Mammary epithelial cell (primary cell): ENCODE measurements at regions of chr3 and their contacts with region 1.

Region 1: DNA sequence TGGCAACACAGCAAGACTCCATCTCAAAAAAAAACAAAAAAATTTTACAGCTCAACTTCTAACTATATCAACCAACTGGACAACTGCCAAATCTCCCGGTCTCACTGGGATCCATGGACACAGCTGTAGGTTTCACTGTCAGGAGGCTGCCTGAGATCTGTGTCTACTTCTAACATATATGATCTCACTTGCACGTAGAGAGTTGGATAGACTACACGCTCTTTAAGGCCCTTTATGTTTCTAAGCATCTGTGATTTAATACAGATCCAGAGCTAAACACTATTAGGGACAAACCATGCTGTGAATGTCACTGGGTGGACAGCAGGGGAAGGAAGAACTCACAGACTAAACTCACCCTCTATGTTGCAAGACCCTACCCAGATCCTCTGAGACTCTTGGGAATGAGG is 13.0 kb upstream of the APOD start:
- DNase-seq: no peak
- H3K4me3 ChIP-seq: no peak overlapping the region
- H3K27ac ChIP-seq: no peak overlapping the region
- H3K4me1 ChIP-seq: no peaks in the 10 kb centered on the region
- H3K27me3 ChIP-seq: no peaks in the 10 kb centered on the region
- CTCF ChIP-seq: no peak

Region 2: DNA sequence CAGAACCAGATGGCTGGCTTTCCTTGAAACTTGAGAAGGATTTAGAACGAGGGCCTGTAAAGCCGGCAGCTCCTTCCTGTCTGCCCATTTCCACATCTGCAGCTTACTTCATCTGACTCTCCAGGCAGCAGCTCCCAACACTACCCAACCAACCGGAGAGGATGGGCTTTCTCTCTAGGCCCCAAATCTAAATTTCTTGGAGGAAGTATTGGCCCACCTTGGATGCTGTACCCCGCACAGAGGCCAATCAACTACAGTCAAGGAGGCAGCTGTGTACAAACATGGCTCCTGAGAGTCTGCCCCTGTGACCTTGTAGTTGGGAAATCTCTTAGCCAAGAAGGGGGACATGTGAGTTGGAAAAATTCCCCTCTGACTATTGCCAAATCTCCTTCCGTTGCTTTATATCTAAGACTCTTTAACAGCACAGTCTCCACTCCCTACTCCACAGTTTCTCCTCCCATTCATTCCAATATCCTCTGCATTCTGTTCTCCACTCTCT is 146.0 kb before region 1 on chr3:
- CTCF ChIA-PET with region 1: no interaction called
- dilution Hi-C with region 1: loop called (anchors 5 kb)
- in situ Hi-C with region 1: no loop called
- intact Hi-C with region 1: no loop called
- DNase-seq: no peak
- H3K4me3 ChIP-seq: no peak overlapping the region
- H3K27ac ChIP-seq: no peak overlapping the region
- H3K4me1 ChIP-seq: no peaks in the 10 kb centered on the region
- H3K27me3 ChIP-seq: no peaks in the 10 kb centered on the region
- CTCF ChIP-seq: no peak

Region 3: DNA sequence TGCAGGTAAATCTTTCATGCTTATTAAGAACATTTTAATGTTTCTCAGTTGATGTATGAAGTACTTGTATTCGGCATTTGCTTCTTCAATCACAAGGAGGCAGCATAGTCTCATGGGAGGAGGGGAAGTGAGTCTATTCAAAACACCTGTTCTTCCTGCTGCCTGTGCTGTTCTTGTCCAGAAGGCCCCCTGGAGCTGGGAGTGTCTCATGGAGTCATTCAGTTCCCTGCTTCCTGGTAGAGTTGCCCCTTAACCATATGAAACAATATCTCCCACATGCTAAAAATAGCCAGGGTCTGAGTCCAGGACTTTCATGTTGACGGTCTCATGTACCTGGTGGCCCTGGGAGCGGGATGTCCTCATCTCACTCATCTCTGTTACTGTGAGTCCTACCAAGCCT is 38.2 kb before region 1 on chr3:
- CTCF ChIA-PET with region 1: no interaction called
- dilution Hi-C with region 1: no loop called
- in situ Hi-C with region 1: no loop called
- intact Hi-C with region 1: loop called (anchors 5 kb)
- DNase-seq: peak; percentile 38
- H3K4me3 ChIP-seq: no peak overlapping the region
- H3K27ac ChIP-seq: no peak overlapping the region
- H3K4me1 ChIP-seq: peaks cover 6% of the 10 kb centered on the region
- H3K27me3 ChIP-seq: no peaks in the 10 kb centered on the region
- CTCF ChIP-seq: peak; percentile 38 to 66

Region 4: DNA sequence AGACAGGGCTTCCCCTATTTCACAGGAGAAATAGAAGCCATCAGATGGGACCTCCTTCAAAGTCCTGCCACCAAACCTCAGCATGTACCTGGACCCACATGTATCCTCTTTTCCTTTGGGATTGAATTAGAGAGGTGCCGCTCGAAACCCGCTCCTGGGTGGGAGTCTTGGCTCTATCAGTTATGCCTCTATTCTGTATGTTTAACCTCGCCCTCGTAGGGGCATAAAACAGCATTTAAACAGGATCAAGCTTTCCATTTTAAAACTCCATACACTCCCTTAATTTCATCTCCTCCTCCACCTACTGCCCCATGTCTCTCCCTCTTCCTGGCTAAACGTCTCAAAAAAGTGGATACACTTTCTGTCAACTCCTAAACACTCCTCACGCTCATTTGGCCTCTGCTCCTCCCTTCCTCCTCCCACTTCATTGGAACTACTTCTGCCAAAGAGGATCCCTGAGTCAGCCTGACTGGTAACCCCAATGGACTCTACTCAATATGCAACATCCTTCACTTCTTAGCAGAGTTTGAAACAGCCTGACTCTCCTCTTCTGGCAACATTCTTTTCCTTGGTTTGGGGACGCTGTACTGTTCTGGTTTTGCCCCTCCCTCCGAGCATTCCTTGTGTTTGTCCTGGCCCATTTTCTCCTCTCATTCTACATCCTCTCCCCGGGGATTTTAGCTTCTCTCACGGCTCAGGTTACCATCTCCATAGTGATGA is 101.0 kb after region 1 on chr3:
- CTCF ChIA-PET with region 1: no interaction called
- dilution Hi-C with region 1: no loop called
- in situ Hi-C with region 1: no loop called
- intact Hi-C with region 1: no loop called
- DNase-seq: peak; percentile 64
- H3K4me3 ChIP-seq: no peak overlapping the region
- H3K27ac ChIP-seq: no peak overlapping the region
- H3K4me1 ChIP-seq: peaks cover 8% of the 10 kb centered on the region
- H3K27me3 ChIP-seq: no peaks in the 10 kb centered on the region
- CTCF ChIP-seq: no peak